ENCODE measurements at regions of chr19 and their contacts with region 1.

Region 1: GRCh38 chr19:7492142-7492541 is 3.3 kb upstream of the PEX11G start:
- DNase-seq: no peak
- H3K4me3 ChIP-seq: no peak overlapping the region
- H3K27ac ChIP-seq: no peak overlapping the region
- H3K4me1 ChIP-seq: no peaks in the 10 kb centered on the region
- H3K27me3 ChIP-seq: no peaks in the 10 kb centered on the region
- CTCF ChIP-seq: no peak

Region 2: GRCh38 chr19:7211204-7211951 is 280.8 kb before region 1 on chr19:
- CTCF ChIA-PET with region 1: no interaction called
- POLR2A ChIA-PET with region 1: no interaction called
- intact Hi-C with region 1: no loop called
- DNase-seq: no peak
- H3K4me3 ChIP-seq: no peak overlapping the region
- H3K27ac ChIP-seq: no peak overlapping the region
- H3K4me1 ChIP-seq: no peaks in the 10 kb centered on the region
- H3K27me3 ChIP-seq: no peaks in the 10 kb centered on the region
- CTCF ChIP-seq: no peak

Region 3: DNA sequence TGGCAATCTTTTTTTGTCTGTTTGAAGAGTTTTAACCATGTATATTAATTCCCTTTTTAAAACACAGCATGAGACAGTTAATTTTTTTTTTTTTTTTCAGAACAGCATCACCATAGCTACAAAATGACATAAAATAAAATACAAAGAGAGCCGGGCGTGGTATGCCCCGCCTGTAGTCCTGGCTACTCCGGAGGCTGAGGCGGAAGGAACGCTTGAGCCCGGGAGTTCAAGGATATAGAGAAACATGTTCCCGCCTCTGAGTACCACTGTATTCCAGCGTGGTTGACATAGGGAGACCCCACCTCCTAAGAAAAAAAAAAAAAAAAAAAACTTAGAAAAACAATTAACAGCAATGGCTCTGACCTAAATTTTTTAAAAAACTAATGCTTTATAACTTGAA is 187.9 kb before region 1 on chr19:
- CTCF ChIA-PET with region 1: no interaction called
- POLR2A ChIA-PET with region 1: interaction called, 10 read pairs
- intact Hi-C with region 1: no loop called
- DNase-seq: no peak
- H3K4me3 ChIP-seq: no peak overlapping the region
- H3K27ac ChIP-seq: no peak overlapping the region
- H3K4me1 ChIP-seq: no peaks in the 10 kb centered on the region
- H3K27me3 ChIP-seq: no peaks in the 10 kb centered on the region
- CTCF ChIP-seq: no peak